ENCODE measurements at regions of chr13 and their contacts with region 1.

Region 1: GRCh38 chr13:29354377-29354776 is 241.1 kb downstream of the SLC7A1 start:
- DNase-seq: no peak

Region 2: DNA sequence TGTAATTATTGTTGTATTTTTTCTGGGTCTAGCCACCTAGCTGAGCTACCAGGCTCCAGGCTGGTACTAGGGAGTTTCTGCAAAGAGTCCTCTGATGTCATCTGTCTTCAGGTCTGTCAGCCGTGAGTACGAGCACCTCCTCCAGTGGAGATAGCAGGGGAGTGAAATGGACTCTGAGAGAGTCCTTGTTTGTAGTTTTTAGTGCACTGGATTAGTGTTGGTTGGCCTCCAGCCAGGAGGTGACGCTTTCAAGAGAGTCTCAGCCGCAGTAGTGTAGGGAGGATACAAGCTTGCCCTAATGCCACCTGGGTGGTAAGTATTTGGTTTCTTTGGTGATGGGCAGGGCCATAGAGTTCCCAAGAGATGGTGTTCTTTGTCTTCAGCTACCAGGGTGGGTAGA is 143.7 kb before region 1 on chr13:
- intact Hi-C with region 1: loop called (anchors 5 kb)
- DNase-seq: no peak